ENCODE measurements at regions of chr12 and their contacts with region 1.

Region 1: GRCh38 chr12:96061864-96062453 is 26.6 kb upstream of the LTA4H start:
- DNase-seq: peak; percentile 61 to 89 (median 77)
- ATAC-seq: peak; percentile 94
- H3K4me3 ChIP-seq: no peak overlapping the region
- H3K4me3 Mint-ChIP-seq: no peak overlapping the region
- H3K27ac ChIP-seq: no peak overlapping the region
- H3K27ac Mint-ChIP-seq: peak overlapping the region; percentile 2
- H3K4me1 ChIP-seq: peaks cover 7% of the 10 kb centered on the region
- H3K4me1 Mint-ChIP-seq: peaks cover 14% of the 10 kb centered on the region
- H3K27me3 ChIP-seq: no peaks in the 10 kb centered on the region
- H3K27me3 Mint-ChIP-seq: no peaks in the 10 kb centered on the region
- CTCF ChIP-seq: peak; percentile 79

Region 2: GRCh38 chr12:94689002-94689645 is 1372.8 kb before region 1 on chr12:
- CTCF ChIA-PET with region 1: no interaction called
- POLR2A ChIA-PET with region 1: no interaction called
- intact Hi-C with region 1: no loop called
- DNase-seq: peak in 1 of 9 experiments; percentile 14
- ATAC-seq: no peak
- H3K4me3 ChIP-seq: no peak overlapping the region
- H3K4me3 Mint-ChIP-seq: no peak overlapping the region
- H3K27ac ChIP-seq: no peak overlapping the region
- H3K27ac Mint-ChIP-seq: no peak overlapping the region
- H3K4me1 ChIP-seq: no peaks in the 10 kb centered on the region
- H3K4me1 Mint-ChIP-seq: no peaks in the 10 kb centered on the region
- H3K27me3 ChIP-seq: no peaks in the 10 kb centered on the region
- H3K27me3 Mint-ChIP-seq: no peaks in the 10 kb centered on the region
- CTCF ChIP-seq: no peak

Region 3: GRCh38 chr12:96108321-96108720 is 46.4 kb after region 1 on chr12:
- CTCF ChIA-PET with region 1: no interaction called
- POLR2A ChIA-PET with region 1: no interaction called
- intact Hi-C with region 1: loop called in 1 of 2 experiments (anchors 5 kb)
- DNase-seq: peak in 7 of 9 experiments; percentile 22 to 56 (median 25)
- ATAC-seq: peak; percentile 51
- H3K4me3 ChIP-seq: no peak overlapping the region
- H3K4me3 Mint-ChIP-seq: peak overlapping the region; percentile 61
- H3K27ac ChIP-seq: peak overlapping the region in 1 of 2 experiments; percentile 37
- H3K27ac Mint-ChIP-seq: peak overlapping the region; percentile 89
- H3K4me1 ChIP-seq: peaks cover 7% of the 10 kb centered on the region
- H3K4me1 Mint-ChIP-seq: peaks cover 20% of the 10 kb centered on the region
- H3K27me3 ChIP-seq: no peaks in the 10 kb centered on the region
- H3K27me3 Mint-ChIP-seq: no peaks in the 10 kb centered on the region
- CTCF ChIP-seq: no peak

Region 4: DNA sequence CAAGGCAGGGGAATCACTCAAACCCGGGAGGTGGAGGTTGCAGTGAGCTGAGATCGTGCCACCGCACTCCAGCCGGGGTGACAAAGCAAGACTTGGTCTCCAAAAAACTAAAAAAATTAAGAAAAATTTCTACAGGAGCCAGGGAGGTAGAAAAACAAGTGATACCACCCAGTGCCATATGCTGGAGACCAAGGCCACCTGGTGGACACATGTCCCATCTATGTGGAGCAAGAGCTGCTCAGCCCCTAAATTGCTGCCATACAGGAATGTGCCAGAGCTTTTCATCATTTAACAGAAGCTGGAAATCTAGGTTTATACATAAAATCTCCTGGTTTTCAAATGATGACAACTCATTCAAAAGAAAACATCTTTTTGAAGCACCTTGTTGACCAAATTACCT is 70.9 kb after region 1 on chr12:
- CTCF ChIA-PET with region 1: interaction called, 6 read pairs
- POLR2A ChIA-PET with region 1: no interaction called
- intact Hi-C with region 1: loop called in 1 of 2 experiments (anchors 2 kb)
- DNase-seq: peak in 4 of 9 experiments; percentile 15 to 34 (median 16)
- ATAC-seq: no peak
- H3K4me3 ChIP-seq: no peak overlapping the region
- H3K4me3 Mint-ChIP-seq: no peak overlapping the region
- H3K27ac ChIP-seq: no peak overlapping the region
- H3K27ac Mint-ChIP-seq: no peak overlapping the region
- H3K4me1 ChIP-seq: no peaks in the 10 kb centered on the region
- H3K4me1 Mint-ChIP-seq: peaks cover 6% of the 10 kb centered on the region
- H3K27me3 ChIP-seq: no peaks in the 10 kb centered on the region
- H3K27me3 Mint-ChIP-seq: peaks cover 13% of the 10 kb centered on the region
- CTCF ChIP-seq: no peak

Region 5: GRCh38 chr12:96194971-96195844 is 133.2 kb after region 1 on chr12:
- CTCF ChIA-PET with region 1: interaction called, 6 read pairs
- POLR2A ChIA-PET with region 1: no interaction called
- intact Hi-C with region 1: loop called in 1 of 2 experiments (anchors 5 kb)
- DNase-seq: peak; percentile 37 to 93 (median 73)
- ATAC-seq: peak; percentile 70
- H3K4me3 ChIP-seq: peak overlapping the region; percentile 87 to 95
- H3K4me3 Mint-ChIP-seq: peak overlapping the region; percentile 94
- H3K27ac ChIP-seq: peak overlapping the region; percentile 74 to 77
- H3K27ac Mint-ChIP-seq: peak overlapping the region; percentile 97
- H3K4me1 ChIP-seq: peaks cover 43% of the 10 kb centered on the region
- H3K4me1 Mint-ChIP-seq: peaks cover 64% of the 10 kb centered on the region
- H3K27me3 ChIP-seq: no peaks in the 10 kb centered on the region
- H3K27me3 Mint-ChIP-seq: no peaks in the 10 kb centered on the region
- CTCF ChIP-seq: no peak

Region 6: DNA sequence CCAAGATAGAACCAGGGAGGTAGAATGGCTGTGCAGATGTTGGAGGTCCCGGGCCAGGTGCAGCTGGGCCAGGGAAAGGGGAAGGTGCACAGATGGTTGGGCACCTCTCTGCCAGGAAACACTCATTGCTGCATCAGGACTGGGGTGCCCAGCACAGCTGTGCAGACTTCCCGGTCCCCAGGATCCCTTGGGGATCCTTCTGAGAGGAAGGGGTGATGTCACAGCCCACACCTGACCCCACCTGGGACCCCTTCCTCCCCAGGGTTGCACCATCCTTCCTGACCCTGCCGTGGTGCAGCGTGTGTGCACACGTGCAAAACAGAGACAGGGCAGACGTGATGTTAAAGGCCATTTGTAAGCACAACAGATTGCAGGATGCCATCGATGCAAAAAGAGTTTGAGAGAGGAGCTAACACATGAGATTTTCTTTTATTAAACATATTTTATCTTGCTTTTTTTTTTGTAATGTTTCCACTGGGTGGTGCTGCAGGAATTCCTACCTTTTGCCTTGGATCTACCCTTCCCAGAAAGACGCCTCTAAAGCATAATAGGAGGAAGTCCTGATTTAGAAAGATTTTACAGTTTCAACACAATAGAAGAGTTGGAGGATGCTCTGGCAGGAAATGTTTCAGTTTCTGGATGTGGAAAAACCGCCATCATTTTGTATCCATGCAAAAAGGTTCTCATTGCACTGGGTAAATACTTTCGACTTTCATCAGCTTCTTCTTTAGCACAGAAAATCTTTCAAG is 147.0 kb after region 1 on chr12:
- CTCF ChIA-PET with region 1: interaction called, 221 read pairs
- POLR2A ChIA-PET with region 1: interaction called, 9 read pairs
- intact Hi-C with region 1: no loop called
- DNase-seq: peak in 1 of 9 experiments; percentile 48
- ATAC-seq: no peak
- H3K4me3 ChIP-seq: no peak overlapping the region
- H3K4me3 Mint-ChIP-seq: peak overlapping the region; percentile 30
- H3K27ac ChIP-seq: no peak overlapping the region
- H3K27ac Mint-ChIP-seq: peak overlapping the region; percentile 6
- H3K4me1 ChIP-seq: peaks cover 84% of the 10 kb centered on the region
- H3K4me1 Mint-ChIP-seq: peaks cover 93% of the 10 kb centered on the region
- H3K27me3 ChIP-seq: no peaks in the 10 kb centered on the region
- H3K27me3 Mint-ChIP-seq: no peaks in the 10 kb centered on the region
- CTCF ChIP-seq: no peak

Region 7: GRCh38 chr12:96285158-96285557 is 223.2 kb after region 1 on chr12:
- CTCF ChIA-PET with region 1: no interaction called
- POLR2A ChIA-PET with region 1: no interaction called
- intact Hi-C with region 1: loop called in 1 of 2 experiments (anchors 10 kb)
- DNase-seq: no peak
- ATAC-seq: no peak
- H3K4me3 ChIP-seq: no peak overlapping the region
- H3K4me3 Mint-ChIP-seq: no peak overlapping the region
- H3K27ac ChIP-seq: no peak overlapping the region
- H3K27ac Mint-ChIP-seq: no peak overlapping the region
- H3K4me1 ChIP-seq: no peaks in the 10 kb centered on the region
- H3K4me1 Mint-ChIP-seq: peaks cover 7% of the 10 kb centered on the region
- H3K27me3 ChIP-seq: no peaks in the 10 kb centered on the region
- H3K27me3 Mint-ChIP-seq: no peaks in the 10 kb centered on the region
- CTCF ChIP-seq: no peak

Region 8: GRCh38 chr12:97223419-97223818 is 1161.5 kb after region 1 on chr12:
- CTCF ChIA-PET with region 1: no interaction called
- POLR2A ChIA-PET with region 1: no interaction called
- intact Hi-C with region 1: no loop called
- DNase-seq: no peak
- ATAC-seq: no peak
- H3K4me3 ChIP-seq: no peak overlapping the region
- H3K4me3 Mint-ChIP-seq: no peak overlapping the region
- H3K27ac ChIP-seq: no peak overlapping the region
- H3K27ac Mint-ChIP-seq: no peak overlapping the region
- H3K4me1 ChIP-seq: no peaks in the 10 kb centered on the region
- H3K4me1 Mint-ChIP-seq: no peaks in the 10 kb centered on the region
- H3K27me3 ChIP-seq: no peaks in the 10 kb centered on the region
- H3K27me3 Mint-ChIP-seq: no peaks in the 10 kb centered on the region
- CTCF ChIP-seq: no peak